GM12878 (cell line): ENCODE measurements at regions of chr3 and their contacts with region 1.

Region 1: DNA sequence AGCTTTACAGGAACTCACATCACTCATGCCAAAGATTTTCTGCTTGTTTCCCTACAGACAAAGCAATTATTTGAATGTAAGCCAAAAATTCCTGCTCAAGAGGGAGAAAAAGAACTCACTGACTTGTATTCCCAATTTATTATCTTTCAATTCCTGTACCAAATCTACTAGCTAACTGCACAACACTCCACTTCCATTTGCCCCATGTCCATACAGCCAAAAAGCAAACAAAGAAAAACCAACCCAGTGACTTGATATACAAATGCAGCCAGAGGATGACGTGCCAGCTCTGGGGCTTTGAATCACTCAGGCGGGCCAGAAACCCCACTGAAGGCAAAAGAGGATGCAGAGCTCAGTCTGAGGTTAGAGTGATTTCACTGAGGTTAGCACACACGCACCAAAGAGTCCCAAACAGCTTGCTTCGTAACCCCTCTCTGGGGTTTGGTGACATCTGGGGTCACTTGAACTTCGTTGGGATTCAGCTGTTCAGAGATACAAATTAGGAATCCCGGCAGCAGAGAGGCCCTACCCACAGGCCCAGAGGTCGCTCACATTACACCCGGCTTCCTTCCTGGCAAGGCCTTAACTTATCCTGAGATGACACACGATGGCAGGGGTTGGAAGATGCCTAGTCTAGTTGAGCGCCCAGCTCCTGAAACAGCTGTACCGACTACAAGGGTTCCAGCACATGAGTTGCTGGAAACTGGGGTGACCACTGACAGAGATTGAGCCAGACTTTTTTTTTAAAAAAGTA is 1.6 kb downstream of the RFTN1 start:
- DNase-seq: peak; percentile 98
- ATAC-seq: peak; percentile 48
- H3K4me3 ChIP-seq: peak overlapping the region; percentile 86
- H3K27ac ChIP-seq: peak overlapping the region; percentile 92
- H3K4me1 ChIP-seq: peaks cover 37% of the 10 kb centered on the region
- H3K27me3 ChIP-seq: no peaks in the 10 kb centered on the region
- CTCF ChIP-seq: peak in 1 of 3 experiments; percentile 0; a peak in 1 of 6 replicates
- EP300 ChIP-seq: peak; percentile 99
- POLR2A ChIP-seq: peak; percentile 64
- RAD21 ChIP-seq: peak; percentile 8; the same call in 1 of the 2 replicates

Region 2: DNA sequence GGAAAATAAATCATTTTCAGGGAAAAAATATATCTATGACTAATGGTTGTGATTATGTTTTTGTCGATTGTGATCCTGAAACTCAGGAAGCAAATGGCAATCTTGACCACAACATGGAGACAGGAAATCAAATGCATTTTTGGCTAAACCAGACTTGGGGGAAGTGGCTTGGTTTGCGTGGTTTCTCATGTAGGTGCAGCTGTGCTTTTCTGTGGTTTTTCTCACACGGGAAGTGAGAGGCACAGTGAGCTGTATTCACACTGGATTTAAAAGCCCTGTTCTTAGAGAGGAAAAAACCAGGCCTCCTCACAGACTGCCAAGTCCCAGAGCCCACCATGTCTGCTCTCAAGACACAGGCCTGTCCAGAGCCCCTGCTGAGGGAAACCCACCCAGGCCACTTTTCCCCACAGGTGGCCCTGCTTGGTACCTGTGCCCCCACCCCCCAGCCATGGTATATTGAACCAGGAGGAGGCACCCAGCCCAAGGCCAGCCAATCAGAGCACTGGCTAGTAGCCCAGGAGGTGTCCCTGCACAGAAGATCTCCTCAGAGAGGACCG is 864.2 kb before region 1 on chr3:
- CTCF ChIA-PET with region 1: no interaction called
- POLR2A ChIA-PET with region 1: no interaction called
- RAD21 ChIA-PET with region 1: no interaction called
- SMC1A ChIA-PET with region 1: no interaction called
- in situ Hi-C with region 1: no loop called
- intact Hi-C with region 1: loop called (anchors 10 kb)
- DNase-seq: peak; percentile 94
- ATAC-seq: peak; percentile 96
- H3K4me3 ChIP-seq: peak overlapping the region; percentile 24
- H3K27ac ChIP-seq: peak overlapping the region; percentile 81
- H3K4me1 ChIP-seq: peaks cover 38% of the 10 kb centered on the region
- H3K27me3 ChIP-seq: no peaks in the 10 kb centered on the region
- CTCF ChIP-seq: no peak
- EP300 ChIP-seq: peak; percentile 87 to 95
- POLR2A ChIP-seq: peak; percentile 30; the same call in 1 of the 2 replicates
- RAD21 ChIP-seq: no peak

Region 3: DNA sequence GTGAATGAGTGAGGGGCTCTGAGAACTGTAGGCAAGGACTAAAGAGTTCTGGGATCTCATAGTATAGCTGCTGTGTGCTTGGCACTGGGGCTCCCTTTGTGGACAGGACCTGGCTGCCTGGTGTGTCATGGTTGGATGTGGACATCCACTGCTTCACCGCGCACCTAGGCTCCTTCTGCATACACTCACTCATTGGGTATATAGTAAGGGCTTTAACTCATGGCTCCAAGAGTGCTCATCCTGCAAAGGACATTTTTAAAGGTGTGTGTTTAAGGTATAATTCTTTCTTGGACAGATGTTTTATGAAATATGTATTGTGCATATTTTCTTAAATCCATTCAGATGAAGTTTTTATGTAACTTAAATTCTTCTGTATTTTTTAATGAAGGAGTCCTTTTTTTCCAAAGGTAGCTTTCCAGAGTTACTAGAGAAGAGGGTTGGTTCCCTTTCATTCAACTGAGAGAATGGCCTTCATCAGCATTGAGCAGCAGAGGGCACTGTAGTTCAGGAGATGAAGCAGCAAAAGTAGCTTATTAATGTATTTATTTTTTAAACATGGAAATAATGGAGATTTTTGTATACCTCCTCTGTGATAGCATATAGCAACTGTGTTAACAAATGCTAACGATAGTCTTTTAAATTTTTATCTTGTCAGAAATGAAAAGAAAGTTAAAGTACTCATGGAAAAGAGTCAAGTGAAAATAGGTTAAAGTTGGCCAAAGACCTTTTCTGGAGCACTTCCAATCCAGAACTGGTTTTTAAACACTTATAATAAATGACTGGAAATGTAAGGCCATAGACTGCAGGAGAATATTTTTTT is 221.6 kb before region 1 on chr3:
- CTCF ChIA-PET with region 1: interaction called, 13 read pairs
- POLR2A ChIA-PET with region 1: interaction called, 3 read pairs
- RAD21 ChIA-PET with region 1: interaction called, 37 read pairs
- SMC1A ChIA-PET with region 1: interaction called, 23 read pairs
- in situ Hi-C with region 1: no loop called
- intact Hi-C with region 1: loop called (anchors 2 kb)
- DNase-seq: no peak
- ATAC-seq: peak; percentile 58
- H3K4me3 ChIP-seq: no peak overlapping the region
- H3K27ac ChIP-seq: peak overlapping the region; percentile 5; the same call in 1 of the 2 replicates
- H3K4me1 ChIP-seq: peaks cover 11% of the 10 kb centered on the region
- H3K27me3 ChIP-seq: no peaks in the 10 kb centered on the region
- CTCF ChIP-seq: peak; percentile 64 to 89 (median 81)
- EP300 ChIP-seq: no peak
- POLR2A ChIP-seq: no peak
- RAD21 ChIP-seq: peak; percentile 96

Region 4: DNA sequence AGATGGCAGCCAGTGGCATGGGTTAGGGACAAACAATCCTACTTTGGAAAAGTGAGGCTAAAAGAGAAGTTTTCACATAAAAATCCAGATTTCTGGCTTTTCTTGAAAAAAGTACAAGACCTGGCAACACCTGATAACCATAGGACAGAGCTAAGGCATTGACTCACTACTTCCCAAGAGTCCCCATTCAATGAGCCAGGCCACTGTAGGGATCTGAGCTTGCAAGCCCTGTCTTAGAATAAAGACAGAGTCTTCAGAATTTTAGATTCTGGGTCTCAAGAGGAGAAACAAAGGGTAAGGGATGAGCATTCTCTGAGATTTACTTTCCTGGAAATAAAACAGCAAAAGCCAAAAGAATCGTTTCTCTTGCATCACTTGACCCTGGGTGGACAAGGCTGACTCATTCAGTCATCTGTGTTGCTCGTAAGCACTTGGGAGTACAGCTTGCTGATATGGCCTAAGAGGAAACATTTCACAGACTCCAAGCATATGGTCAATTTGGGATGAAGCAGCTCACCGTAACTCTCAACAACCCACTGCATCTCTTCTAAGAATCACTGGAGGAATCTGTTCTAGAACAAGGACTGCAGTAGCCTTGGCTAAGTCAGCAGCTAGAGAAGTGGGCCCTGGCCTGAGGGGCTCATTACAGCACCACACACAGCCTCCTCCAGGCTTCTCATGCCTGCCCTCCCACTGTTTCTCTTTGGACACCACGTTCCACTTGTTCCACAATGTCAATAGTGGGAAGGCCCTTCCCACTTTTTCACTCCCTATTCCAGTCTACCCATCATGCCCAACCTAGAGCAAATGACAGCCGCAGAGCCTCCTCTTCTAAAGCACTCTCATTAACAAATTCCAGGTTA is 84.5 kb before region 1 on chr3:
- CTCF ChIA-PET with region 1: interaction called, 6 read pairs
- POLR2A ChIA-PET with region 1: interaction called, 15 read pairs
- RAD21 ChIA-PET with region 1: interaction called, 74 read pairs
- SMC1A ChIA-PET with region 1: interaction called, 175 read pairs
- in situ Hi-C with region 1: no loop called
- intact Hi-C with region 1: loop called (anchors 1 kb)
- DNase-seq: no peak
- ATAC-seq: no peak
- H3K4me3 ChIP-seq: no peak overlapping the region
- H3K27ac ChIP-seq: no peak overlapping the region
- H3K4me1 ChIP-seq: peaks cover 28% of the 10 kb centered on the region
- H3K27me3 ChIP-seq: no peaks in the 10 kb centered on the region
- CTCF ChIP-seq: no peak
- EP300 ChIP-seq: no peak
- POLR2A ChIP-seq: no peak
- RAD21 ChIP-seq: no peak

Region 5: DNA sequence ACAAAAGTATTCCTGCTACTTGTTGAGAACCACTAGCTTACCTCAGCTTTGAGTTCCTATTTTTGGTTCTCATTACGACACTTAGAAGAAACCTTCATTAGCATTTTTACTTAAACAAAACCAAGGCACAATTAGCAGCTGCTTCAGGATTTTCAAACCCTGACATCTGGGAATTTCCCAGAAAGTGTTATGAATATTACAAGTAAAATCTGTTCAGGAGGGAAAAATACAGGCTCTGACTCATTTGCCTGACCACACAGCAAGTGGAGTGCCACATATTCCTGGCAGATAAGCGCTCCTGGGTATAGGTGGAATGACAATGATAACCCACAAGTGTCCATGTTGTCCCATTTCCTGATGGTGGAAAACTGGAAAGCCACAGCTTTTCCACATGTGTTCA is 11.9 kb after region 1 on chr3:
- CTCF ChIA-PET with region 1: interaction called, 15 read pairs
- POLR2A ChIA-PET with region 1: interaction called, 32 read pairs
- RAD21 ChIA-PET with region 1: interaction called, 38 read pairs
- SMC1A ChIA-PET with region 1: interaction called, 49 read pairs
- in situ Hi-C with region 1: no loop called
- intact Hi-C with region 1: loop called (anchors 1 kb)
- DNase-seq: no peak
- ATAC-seq: no peak
- H3K4me3 ChIP-seq: no peak overlapping the region
- H3K27ac ChIP-seq: peak overlapping the region; percentile 49; the same call in 1 of the 2 replicates
- H3K4me1 ChIP-seq: peaks cover 39% of the 10 kb centered on the region
- H3K27me3 ChIP-seq: no peaks in the 10 kb centered on the region
- CTCF ChIP-seq: no peak
- EP300 ChIP-seq: no peak
- POLR2A ChIP-seq: no peak
- RAD21 ChIP-seq: no peak

Region 6: GRCh38 chr3:16897254-16897926 is 385.5 kb after region 1 on chr3:
- CTCF ChIA-PET with region 1: no interaction called
- POLR2A ChIA-PET with region 1: no interaction called
- RAD21 ChIA-PET with region 1: no interaction called
- SMC1A ChIA-PET with region 1: no interaction called
- in situ Hi-C with region 1: no loop called
- intact Hi-C with region 1: loop called (anchors 10 kb)
- DNase-seq: peak; percentile 52
- ATAC-seq: peak; percentile 79
- H3K4me3 ChIP-seq: peak overlapping the region; percentile 47; the same call in 1 of the 2 replicates
- H3K27ac ChIP-seq: peak overlapping the region; percentile 79
- H3K4me1 ChIP-seq: peaks cover 26% of the 10 kb centered on the region
- H3K27me3 ChIP-seq: no peaks in the 10 kb centered on the region
- CTCF ChIP-seq: no peak
- EP300 ChIP-seq: peak in 1 of 2 experiments; percentile 47; a peak in 1 of 4 replicates
- POLR2A ChIP-seq: no peak
- RAD21 ChIP-seq: no peak